ENCODE measurements at regions of chr1 and their contacts with region 1.

Region 1: GRCh38 chr1:223474804-223475203 is 81.6 kb downstream of the CCDC185 start:
- DNase-seq: no peak
- H3K4me3 ChIP-seq: no peak overlapping the region
- H3K27ac ChIP-seq: no peak overlapping the region
- H3K4me1 ChIP-seq: no peaks in the 10 kb centered on the region
- H3K27me3 ChIP-seq: no peaks in the 10 kb centered on the region
- CTCF ChIP-seq: no peak
- POLR2A ChIP-seq: no peak

Region 2: DNA sequence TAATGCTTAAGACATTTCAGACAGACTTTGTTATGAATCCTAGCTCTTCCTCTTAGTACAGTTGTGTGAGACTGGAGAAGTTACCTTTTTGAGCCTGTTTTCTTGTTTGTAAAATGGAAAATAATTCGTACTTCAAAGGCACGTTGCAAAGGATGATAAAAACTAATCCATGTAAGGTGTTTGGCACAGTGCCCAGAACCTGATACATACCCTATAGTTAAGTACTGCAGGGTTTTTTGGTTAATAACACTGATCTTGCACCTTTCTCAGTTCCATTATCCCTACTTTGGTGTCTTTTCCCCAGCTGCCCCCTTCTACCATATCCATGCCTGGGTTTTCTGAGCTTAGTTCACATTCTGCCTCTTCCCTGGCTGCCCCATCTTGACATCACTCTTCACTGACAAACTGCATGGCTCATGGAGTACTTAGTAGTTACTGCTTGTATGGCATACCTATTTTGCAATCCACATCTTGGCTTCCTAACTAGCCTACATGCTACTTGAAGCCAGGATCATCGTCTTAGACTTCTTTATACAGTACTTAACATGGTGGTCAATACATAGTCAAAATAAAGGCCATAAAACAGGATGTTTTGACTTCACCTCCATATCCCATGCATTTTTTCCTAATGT is 71.5 kb before region 1 on chr1:
- intact Hi-C with region 1: loop called (anchors 2 kb)
- DNase-seq: no peak
- H3K4me3 ChIP-seq: no peak overlapping the region
- H3K27ac ChIP-seq: no peak overlapping the region
- H3K4me1 ChIP-seq: no peaks in the 10 kb centered on the region
- H3K27me3 ChIP-seq: no peaks in the 10 kb centered on the region
- CTCF ChIP-seq: no peak
- POLR2A ChIP-seq: no peak

Region 3: DNA sequence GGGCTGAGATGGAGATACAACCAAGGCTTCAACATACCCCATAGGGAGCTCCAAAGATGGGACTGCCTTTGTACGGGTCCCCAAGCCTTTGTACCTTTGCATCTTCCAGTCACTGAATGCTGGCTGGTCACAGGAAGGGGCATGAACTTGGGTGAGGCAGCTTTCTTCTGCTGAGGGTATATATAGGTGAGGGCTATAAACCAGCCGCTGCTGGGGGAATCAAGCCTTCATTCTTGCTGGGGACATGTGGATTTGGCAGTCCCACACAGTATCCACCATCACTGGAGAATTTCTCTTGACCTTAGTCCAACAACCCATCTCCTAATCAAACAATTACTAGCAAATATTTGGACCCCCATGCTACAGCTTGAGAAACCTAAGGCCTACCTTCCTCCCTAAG is 19.8 kb before region 1 on chr1:
- intact Hi-C with region 1: loop called (anchors 1 kb)
- DNase-seq: no peak
- H3K4me3 ChIP-seq: no peak overlapping the region
- H3K27ac ChIP-seq: no peak overlapping the region
- H3K4me1 ChIP-seq: no peaks in the 10 kb centered on the region
- H3K27me3 ChIP-seq: no peaks in the 10 kb centered on the region
- CTCF ChIP-seq: no peak
- POLR2A ChIP-seq: no peak

Measured in breast epithelium (tissue), 4 donors.